Aorta (tissue), 5 donors: ENCODE measurements at regions of chr2 and their contacts with region 1.

Region 1: GRCh38 chr2:226791487-226792081 is 8.0 kb downstream of the IRS1 start:
- DNase-seq: peak; percentile 95 to 96
- ATAC-seq: peak; percentile 96
- H3K4me3 ChIP-seq: peak overlapping the region; percentile 33 to 76
- H3K27ac ChIP-seq: peak overlapping the region; percentile 94 to 97
- H3K4me1 ChIP-seq: peaks cover 0 to 5% of the 10 kb centered on the region in 2 donors
- H3K27me3 ChIP-seq: no peaks in the 10 kb centered on the region

Region 2: DNA sequence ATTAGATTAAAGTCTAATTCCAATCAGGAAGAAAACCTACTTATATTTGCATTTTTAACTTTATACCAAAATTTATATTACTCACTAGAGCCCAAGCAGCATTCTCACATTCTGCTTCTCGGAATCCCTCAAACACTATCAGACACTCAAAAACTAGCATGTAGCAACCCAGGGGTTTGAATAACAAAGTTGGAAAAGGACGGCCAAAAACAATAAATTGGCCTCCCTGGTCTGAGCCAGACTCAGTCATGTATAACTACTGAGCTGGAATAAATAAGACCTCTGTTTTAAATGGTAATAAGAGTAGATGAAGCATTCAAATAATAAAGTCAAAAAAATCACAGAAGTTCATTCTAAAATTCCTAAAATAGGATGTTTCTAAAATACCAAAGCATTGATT is 282.9 kb before region 1 on chr2:
- intact Hi-C with region 1: loop called in 1 of 2 experiments (anchors 10 kb)
- DNase-seq: no peak
- ATAC-seq: peak; percentile 65
- H3K4me3 ChIP-seq: no peak overlapping the region
- H3K27ac ChIP-seq: no peak overlapping the region
- H3K4me1 ChIP-seq: no peaks in the 10 kb centered on the region
- H3K27me3 ChIP-seq: no peaks in the 10 kb centered on the region

Region 3: GRCh38 chr2:226721541-226721940 is 70.0 kb before region 1 on chr2:
- intact Hi-C with region 1: loop called in 1 of 2 experiments (anchors 2 kb)
- DNase-seq: peak in 1 of 2 donors; percentile 45
- ATAC-seq: no peak
- H3K4me3 ChIP-seq: no peak overlapping the region
- H3K27ac ChIP-seq: no peak overlapping the region
- H3K4me1 ChIP-seq: no peaks in the 10 kb centered on the region
- H3K27me3 ChIP-seq: no peaks in the 10 kb centered on the region

Region 4: GRCh38 chr2:226760412-226761194 is 31.0 kb before region 1 on chr2:
- intact Hi-C with region 1: loop called (anchors 5 kb)
- DNase-seq: no peak
- ATAC-seq: no peak
- H3K4me3 ChIP-seq: no peak overlapping the region
- H3K27ac ChIP-seq: no peak overlapping the region
- H3K4me1 ChIP-seq: peaks cover 8 to 30% of the 10 kb centered on the region in 2 donors
- H3K27me3 ChIP-seq: no peaks in the 10 kb centered on the region

Region 5: GRCh38 chr2:226862623-226863022 is 71.0 kb after region 1 on chr2:
- intact Hi-C with region 1: no loop called
- DNase-seq: no peak
- ATAC-seq: no peak
- H3K4me3 ChIP-seq: no peak overlapping the region
- H3K27ac ChIP-seq: no peak overlapping the region
- H3K4me1 ChIP-seq: no peaks in the 10 kb centered on the region
- H3K27me3 ChIP-seq: no peaks in the 10 kb centered on the region

Region 6: DNA sequence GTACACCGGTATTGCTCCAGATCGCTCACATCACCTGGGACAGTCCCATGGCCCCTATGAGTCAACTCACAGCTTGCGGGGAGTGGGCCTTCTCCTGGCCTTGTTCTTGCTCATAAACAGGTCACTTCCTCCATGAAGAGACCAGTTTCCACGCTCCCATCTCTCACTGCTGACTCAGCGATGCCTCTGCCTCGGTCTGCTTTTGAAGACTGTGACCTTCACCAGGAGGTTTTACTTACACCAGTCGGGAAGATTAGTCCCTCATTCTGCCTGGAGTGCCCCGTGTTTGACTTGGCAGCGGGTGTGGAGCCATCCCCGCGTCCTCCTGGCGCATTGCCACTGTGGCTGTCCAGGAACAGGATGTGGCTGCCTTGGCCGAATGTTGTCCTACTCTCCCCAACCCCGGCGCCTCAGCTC is 204.0 kb after region 1 on chr2:
- intact Hi-C with region 1: no loop called
- DNase-seq: peak; percentile 54 to 79
- ATAC-seq: no peak
- H3K4me3 ChIP-seq: no peak overlapping the region
- H3K27ac ChIP-seq: no peak overlapping the region
- H3K4me1 ChIP-seq: no peaks in the 10 kb centered on the region
- H3K27me3 ChIP-seq: no peaks in the 10 kb centered on the region